Vagina (tissue), 2 donors: ENCODE measurements at regions of chr4 and their contacts with region 1.

Region 1: GRCh38 chr4:8541871-8542715 is 38.1 kb upstream of the GPR78 start:
- DNase-seq: no peak
- H3K4me3 ChIP-seq: no peak overlapping the region
- H3K27ac ChIP-seq: no peak overlapping the region
- H3K4me1 ChIP-seq: peaks cover 5% of the 10 kb centered on the region
- H3K27me3 ChIP-seq: no peaks in the 10 kb centered on the region
- CTCF ChIP-seq: no peak
- POLR2A ChIP-seq: no peak

Region 2: GRCh38 chr4:7581477-7581876 is 960.6 kb before region 1 on chr4:
- intact Hi-C with region 1: no loop called
- DNase-seq: no peak
- H3K4me3 ChIP-seq: no peak overlapping the region
- H3K27ac ChIP-seq: no peak overlapping the region
- H3K4me1 ChIP-seq: peaks cover 10% of the 10 kb centered on the region
- H3K27me3 ChIP-seq: no peaks in the 10 kb centered on the region
- CTCF ChIP-seq: no peak
- POLR2A ChIP-seq: no peak

Region 3: DNA sequence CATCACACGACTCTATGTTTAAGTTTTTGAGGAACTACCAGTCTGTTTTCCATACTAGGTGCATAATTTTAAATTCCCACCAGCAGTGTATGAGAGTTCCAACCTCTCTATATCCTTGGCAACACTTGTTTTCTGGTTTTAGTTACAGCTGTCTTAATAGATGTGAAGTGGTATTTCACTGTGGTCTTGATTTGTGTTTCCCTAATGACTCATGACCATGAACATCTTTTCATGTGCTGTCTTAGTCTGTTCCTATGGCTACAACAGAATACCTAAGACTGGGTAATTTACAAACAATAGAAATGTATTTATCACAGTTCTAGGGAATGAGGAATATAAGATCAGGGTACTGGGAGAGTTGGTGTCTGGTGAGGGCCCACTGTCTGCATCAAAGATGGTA is 13.4 kb before region 1 on chr4:
- intact Hi-C with region 1: loop called (anchors 1 kb)
- DNase-seq: no peak
- H3K4me3 ChIP-seq: no peak overlapping the region
- H3K27ac ChIP-seq: no peak overlapping the region
- H3K4me1 ChIP-seq: peaks cover 14% of the 10 kb centered on the region
- H3K27me3 ChIP-seq: no peaks in the 10 kb centered on the region
- CTCF ChIP-seq: no peak
- POLR2A ChIP-seq: no peak

Region 4: GRCh38 chr4:8594097-8595038 is 52.3 kb after region 1 on chr4:
- intact Hi-C with region 1: no loop called
- DNase-seq: no peak
- H3K4me3 ChIP-seq: peak overlapping the region in 1 of 2 donors; percentile 41
- H3K27ac ChIP-seq: peak overlapping the region; percentile 67
- H3K4me1 ChIP-seq: peaks cover 32% of the 10 kb centered on the region
- H3K27me3 ChIP-seq: no peaks in the 10 kb centered on the region
- CTCF ChIP-seq: peak; percentile 40 to 70 (median 47)
- POLR2A ChIP-seq: no peak